ENCODE measurements at regions of chr17 and their contacts with region 1.

Region 1: GRCh38 chr17:28433721-28434120 is 27.7 kb upstream of the SLC46A1 start:
- DNase-seq: no peak
- H3K4me3 ChIP-seq: no peak overlapping the region
- H3K27ac ChIP-seq: no peak overlapping the region
- H3K27me3 ChIP-seq: peaks cover 0 to 6% (median 0%) of the 10 kb centered on the region in 45 donors
- CTCF ChIP-seq: no peak

Region 2: DNA sequence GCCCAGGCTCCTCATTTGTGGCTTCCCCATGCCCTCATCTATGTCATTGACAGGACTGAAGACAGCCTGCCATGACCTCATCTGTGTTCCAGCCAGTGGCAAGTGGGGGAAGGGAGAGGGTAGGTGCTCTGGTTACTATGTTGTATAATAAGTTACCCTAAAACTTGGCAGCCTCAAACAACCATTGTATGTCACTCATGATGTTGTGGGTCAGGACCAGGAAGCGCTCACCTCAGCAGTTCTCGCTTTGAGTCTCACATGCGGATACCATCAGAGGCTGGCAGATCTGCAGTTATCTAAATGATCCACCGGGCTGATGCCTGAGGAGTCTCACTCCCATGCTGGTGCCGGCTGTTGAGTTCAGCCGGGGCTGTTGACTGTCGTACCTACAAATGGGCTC is 203.7 kb before region 1 on chr17:
- intact Hi-C with region 1: no loop called
- DNase-seq: peak in 1 of 10 donors; percentile 6
- H3K4me3 ChIP-seq: no peak overlapping the region
- H3K27ac ChIP-seq: no peak overlapping the region
- H3K27me3 ChIP-seq: peaks cover 0 to 14% (median 0%) of the 10 kb centered on the region in 45 donors
- CTCF ChIP-seq: no peak

Region 3: GRCh38 chr17:28371245-28372202 is 62.2 kb before region 1 on chr17 and contains the start of gene SARM1:
- intact Hi-C with region 1: loop called in 1 of 2 experiments (anchors 10 kb)
- DNase-seq: peak; percentile 65 to 92 (median 83)
- H3K4me3 ChIP-seq: peak within 1 kb of the TSS; percentile 55 to 83 (median 73)
- H3K27ac ChIP-seq: peak within 1 kb of the TSS in 58 of 59 donors; percentile 39 to 93 (median 86)
- H3K27me3 ChIP-seq: no peaks in the 10 kb centered on the region
- CTCF ChIP-seq: peak in 1 of 56 donors; percentile 12
- total RNA-seq, gene SARM1: 20.6 to 48.1 (median 33.1) TPM